ENCODE measurements at regions of chr5 and their contacts with region 1.

Region 1: DNA sequence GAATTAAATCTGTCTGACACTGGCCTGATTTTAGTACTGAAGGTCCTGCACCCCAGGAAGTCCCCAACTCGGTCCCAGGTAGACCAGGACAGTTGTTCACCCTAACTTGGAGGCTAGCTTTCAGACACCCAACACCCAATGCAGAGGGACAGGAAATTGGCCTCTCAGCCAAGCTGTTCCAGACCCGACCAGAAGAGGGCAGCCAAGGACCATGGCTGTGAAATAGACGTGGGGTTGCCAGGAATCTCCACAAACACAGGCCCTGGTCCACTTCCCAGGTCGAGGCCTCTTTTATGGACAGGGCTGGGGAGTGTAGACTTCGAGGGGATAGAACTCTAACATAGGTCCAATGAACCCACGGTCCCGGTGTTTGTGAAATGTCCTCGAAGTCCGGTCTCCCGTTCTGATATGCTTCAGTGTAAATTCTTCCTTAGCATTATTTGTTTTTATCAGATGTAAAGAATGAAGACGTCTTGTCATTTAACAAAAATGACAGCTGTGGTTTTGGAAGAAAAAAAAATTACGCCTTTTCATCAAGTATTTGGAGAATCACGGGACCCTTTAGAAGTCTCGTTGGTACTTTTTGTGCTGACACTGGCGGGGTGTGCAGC is 260.3 kb upstream of the ADAMTS16 start:
- DNase-seq: peak; percentile 79
- H3K4me3 ChIP-seq: no peak overlapping the region
- CTCF ChIP-seq: peak; percentile 99

Region 2: GRCh38 chr5:5419294-5420210 is 539.8 kb after region 1 on chr5:
- in situ Hi-C with region 1: loop called (anchors 5 kb)
- DNase-seq: peak; percentile 39
- H3K4me3 ChIP-seq: no peak overlapping the region
- CTCF ChIP-seq: peak; percentile 68